ENCODE measurements at regions of chr15 and their contacts with region 1.

Region 1: DNA sequence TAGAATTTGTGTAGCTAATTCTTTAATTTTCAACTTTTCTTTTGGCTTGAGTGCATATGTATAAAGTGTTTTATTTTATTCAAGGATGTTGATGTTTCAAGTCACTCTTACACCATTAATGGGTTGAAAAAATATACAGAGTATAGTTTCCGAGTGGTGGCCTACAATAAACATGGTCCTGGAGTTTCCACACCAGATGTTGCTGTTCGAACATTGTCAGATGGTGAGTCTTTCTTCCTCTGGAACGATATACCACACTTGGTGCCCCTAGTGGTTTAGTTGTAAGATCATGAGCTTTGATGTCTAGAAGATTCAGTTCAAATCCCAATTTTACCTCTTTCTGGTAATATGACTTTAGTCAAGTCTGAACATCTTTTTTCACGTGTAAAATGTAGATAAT is 119.3 kb downstream of the HCN4 start:
- DNase-seq: no peak
- H3K4me3 ChIP-seq: no peak overlapping the region
- H3K27ac ChIP-seq: no peak overlapping the region
- H3K4me1 ChIP-seq: no peaks in the 10 kb centered on the region
- H3K27me3 ChIP-seq: no peaks in the 10 kb centered on the region
- CTCF ChIP-seq: no peak
- EP300 ChIP-seq: no peak
- RAD21 ChIP-seq: no peak

Region 2: DNA sequence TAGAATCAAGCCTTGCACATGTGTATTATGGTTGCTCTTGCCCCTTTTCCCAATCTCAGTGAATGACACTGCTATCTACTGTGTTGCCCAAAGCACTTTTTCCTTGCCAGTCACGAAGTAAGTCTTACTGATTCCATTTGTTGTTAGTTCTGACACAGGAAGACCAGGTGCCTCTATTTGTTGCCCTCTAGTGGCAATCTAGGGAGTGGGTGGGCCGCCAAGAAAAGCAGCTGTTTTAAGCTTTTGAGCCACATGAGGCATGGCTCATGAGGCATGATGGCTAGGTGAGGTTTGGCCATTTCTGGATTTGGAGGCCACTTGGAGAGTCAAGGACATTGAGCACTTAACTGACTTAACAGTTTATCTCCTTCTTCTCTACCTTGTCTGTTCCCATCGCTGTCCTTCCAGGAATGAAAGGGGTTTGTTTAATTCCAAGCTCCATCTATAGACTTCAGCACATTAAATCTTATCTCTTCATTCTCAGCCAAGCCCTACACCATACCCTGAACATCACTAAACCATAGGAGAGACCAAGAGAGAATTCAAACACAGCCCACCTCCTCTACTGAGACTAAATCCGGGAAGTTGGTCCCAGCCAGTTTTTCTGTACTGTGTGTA is 16.1 kb after region 1 on chr15:
- CTCF ChIA-PET with region 1: interaction called, 124 read pairs
- POLR2A ChIA-PET with region 1: no interaction called
- DNase-seq: peak; percentile 53
- H3K4me3 ChIP-seq: no peak overlapping the region
- H3K27ac ChIP-seq: no peak overlapping the region
- H3K4me1 ChIP-seq: no peaks in the 10 kb centered on the region
- H3K27me3 ChIP-seq: no peaks in the 10 kb centered on the region
- CTCF ChIP-seq: peak; percentile 71
- EP300 ChIP-seq: no peak
- RAD21 ChIP-seq: peak; percentile 58